Left cardiac atrium (tissue), 4 donors: ENCODE measurements at regions of chr13 and their contacts with region 1.

Region 1: DNA sequence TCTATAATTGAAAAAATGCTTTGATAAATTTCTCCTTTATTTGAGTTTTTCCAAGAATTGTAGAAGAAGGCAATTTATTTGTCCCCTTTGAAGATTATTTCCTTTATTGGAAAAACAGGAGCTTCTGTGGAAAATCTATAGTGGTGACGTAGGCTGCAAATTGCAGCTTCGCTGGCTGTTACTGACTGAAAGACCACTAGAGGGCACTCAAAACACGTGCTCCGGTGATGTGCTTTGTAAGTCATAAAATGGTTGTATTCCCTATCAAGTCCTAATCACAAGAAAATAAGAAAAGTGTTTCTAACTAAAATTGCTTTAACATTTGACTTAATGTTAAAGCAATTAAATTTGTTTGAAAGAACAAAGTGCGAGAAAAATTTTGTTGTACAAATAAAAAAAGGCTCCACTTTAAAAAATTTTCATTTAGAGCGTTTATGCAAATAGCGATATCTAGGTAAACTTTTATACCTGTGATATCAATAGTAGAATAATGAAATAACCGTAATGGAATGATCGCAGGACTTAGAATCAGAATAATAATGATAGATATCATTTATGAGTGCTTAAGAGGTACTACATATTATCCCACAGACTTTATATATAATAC is 638.2 kb upstream of the SPRY2 start:
- DNase-seq: peak; percentile 26
- ATAC-seq: peak in 1 of 2 donors; percentile 48

Region 2: DNA sequence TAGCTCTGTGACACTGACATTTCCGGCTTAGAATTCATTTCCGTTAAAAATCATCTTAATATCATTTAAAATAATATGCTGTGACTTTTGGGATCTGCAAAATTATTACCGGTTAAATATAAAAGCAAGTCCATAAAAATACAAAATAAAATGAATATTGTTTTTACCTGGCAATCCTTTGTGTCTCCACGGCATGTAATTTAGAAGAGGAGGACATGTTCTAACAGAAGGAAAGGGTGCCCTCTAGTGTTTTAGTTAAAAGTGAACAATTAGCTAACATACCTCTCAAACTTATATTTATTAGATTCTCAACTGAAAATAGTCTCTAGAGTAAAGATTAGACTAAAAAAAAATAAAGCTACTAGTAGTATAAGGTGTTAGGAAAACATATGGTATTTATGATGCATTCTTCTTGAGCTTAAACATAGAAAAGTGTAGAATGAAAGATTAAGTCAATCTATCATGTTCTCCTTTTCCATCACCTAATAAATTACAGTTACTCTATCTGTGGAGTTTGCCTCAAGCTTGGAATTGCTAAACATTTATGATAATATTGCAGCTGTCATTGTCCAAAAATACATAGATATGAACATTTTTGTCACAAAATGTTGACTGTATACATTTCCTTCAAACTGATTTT is 38.5 kb after region 1 on chr13:
- intact Hi-C with region 1: loop called in 1 of 2 experiments (anchors 2 kb)
- DNase-seq: no peak
- ATAC-seq: peak; percentile 55 to 57